OCI-LY7 (cell line): ENCODE measurements at regions of chr13 and their contacts with region 1.

Region 1: DNA sequence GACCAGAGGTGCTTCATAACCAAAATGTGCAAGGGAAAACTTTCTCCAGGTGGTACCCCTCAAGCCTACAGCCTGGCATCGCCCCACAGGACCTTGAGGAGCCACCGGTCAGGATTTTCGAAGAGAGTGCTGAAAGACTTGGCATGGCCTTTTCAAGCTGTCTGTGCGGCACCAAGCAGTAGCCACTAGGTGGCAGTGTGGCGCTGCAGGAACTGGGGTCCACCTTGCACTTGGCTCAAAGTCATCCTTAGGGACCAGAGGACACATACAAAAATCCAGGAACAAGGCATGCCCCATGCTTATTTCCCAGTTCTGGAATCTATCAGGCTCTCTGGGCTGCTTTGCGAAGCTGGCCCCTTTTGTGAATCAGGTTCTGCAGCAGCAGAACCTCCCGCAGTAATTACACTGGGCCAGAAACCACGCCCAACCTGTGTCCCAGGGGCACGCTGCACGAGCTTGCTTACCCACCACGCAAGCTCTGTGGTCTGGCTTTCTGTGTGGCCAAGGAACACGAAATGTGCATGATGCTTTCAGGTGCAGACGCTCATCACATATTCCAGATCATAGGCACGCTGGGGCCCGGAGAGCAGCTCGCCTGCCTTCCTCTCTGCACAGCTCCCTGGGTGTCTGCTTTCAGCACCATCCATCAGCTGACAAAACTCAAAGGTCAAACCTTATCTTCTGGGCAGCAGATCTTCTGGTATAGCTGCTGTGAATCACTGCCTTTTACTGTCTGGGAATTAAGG is 87.2 kb downstream of the SLC7A1 start:
- DNase-seq: peak; percentile 74
- H3K4me3 ChIP-seq: no peak overlapping the region
- H3K27ac ChIP-seq: no peak overlapping the region
- H3K4me1 ChIP-seq: no peaks in the 10 kb centered on the region
- CTCF ChIP-seq: peak; percentile 97

Region 2: DNA sequence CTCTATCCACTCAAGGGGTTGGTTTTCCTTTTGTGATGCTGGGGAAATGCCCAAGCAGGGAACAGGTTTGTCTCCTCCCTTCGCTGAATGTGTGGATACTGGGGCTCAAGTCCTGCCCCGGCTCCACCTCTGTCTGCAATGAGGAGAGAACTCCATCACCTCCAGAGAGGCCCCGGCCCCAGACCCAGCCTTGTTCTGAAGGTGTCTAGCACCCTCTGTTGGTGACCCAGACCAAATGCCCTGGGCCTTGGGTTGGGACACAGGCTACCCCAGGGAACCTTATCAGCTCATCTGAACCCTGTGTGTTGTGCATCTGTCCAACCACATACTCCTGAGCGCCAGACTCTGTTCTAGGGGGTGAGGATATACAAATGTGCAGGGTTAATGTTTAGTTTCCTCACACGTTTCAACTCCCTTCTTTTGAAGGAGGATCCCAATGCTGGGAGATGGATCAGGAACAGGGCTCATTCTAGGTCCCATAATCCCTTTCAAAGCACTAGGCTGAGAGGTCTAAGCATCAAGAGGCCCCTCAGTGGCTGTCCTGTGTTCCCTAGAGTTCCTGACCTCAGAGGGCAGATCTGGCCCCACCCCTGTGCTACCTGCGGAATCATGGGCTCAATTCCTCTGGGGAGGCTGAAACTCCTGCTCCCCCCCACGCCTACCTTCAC is 199.7 kb after region 1 on chr13:
- CTCF ChIA-PET with region 1: no interaction called
- POLR2A ChIA-PET with region 1: no interaction called
- intact Hi-C with region 1: loop called (anchors 1 kb)
- DNase-seq: peak; percentile 54
- H3K4me3 ChIP-seq: no peak overlapping the region
- H3K27ac ChIP-seq: no peak overlapping the region
- H3K4me1 ChIP-seq: no peaks in the 10 kb centered on the region
- CTCF ChIP-seq: peak; percentile 80

Region 3: DNA sequence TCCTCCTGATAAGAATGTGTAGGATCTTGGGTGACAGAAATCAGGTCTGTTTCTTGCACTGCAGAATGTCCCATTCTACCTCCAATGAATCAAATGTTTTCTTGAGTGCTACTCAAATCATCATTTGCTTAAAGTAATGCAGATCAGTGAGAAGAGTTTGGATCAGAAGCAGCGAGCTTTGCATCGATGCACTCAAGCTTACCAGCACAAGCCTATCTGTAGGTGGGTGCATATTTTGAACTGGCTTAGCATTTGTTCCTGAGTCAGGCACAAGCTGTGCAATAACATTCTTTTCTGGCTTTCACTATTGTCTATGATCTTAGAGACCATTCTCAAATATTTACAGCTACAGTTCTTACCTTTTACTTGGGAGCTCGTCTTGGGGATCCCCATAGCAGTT is 232.7 kb after region 1 on chr13:
- CTCF ChIA-PET with region 1: no interaction called
- POLR2A ChIA-PET with region 1: no interaction called
- intact Hi-C with region 1: no loop called
- DNase-seq: no peak
- H3K4me3 ChIP-seq: no peak overlapping the region
- H3K27ac ChIP-seq: no peak overlapping the region
- H3K4me1 ChIP-seq: no peaks in the 10 kb centered on the region
- CTCF ChIP-seq: no peak